ENCODE measurements at regions of chr11 and their contacts with region 1.

Region 1: GRCh38 chr11:124758317-124759203 is 3.5 kb downstream of the ESAM start:
- DNase-seq: peak; percentile 77 to 81
- ATAC-seq: peak; percentile 83 to 90
- H3K4me3 ChIP-seq: peak overlapping the region; percentile 52
- H3K27ac ChIP-seq: peak overlapping the region; percentile 72 to 85
- H3K4me1 ChIP-seq: peaks cover 19% of the 10 kb centered on the region
- CTCF ChIP-seq: peak; percentile 58
- EP300 ChIP-seq: no peak
- POLR2A ChIP-seq: no peak
- RAD21 ChIP-seq: peak; percentile 50 to 53; a peak in 4 of 5 replicates

Region 2: DNA sequence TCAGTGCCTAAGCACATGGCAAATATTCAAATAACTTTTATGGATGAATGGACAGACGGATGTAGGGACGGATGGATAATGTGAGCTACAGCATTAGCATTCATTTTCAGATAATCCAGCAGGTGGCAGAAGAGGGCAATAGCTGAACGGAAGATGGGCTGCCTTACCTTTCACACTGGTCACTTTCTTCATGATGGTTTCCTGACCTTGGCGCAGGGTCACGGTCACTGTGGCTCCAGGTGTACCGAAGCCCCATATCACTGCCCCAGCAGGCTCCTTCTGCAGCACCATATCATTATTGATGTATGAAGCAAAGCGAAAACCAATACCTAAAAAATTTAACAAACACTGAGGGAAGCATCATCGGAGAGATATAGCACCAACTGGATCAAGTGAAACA is 89.4 kb before region 1 on chr11:
- CTCF ChIA-PET with region 1: interaction called, 42 read pairs
- POLR2A ChIA-PET with region 1: interaction called, 4 read pairs
- DNase-seq: peak; percentile 48 to 49
- ATAC-seq: peak; percentile 57 to 65; a peak in 4 of 6 replicates
- H3K4me3 ChIP-seq: no peak overlapping the region
- H3K27ac ChIP-seq: no peak overlapping the region
- H3K4me1 ChIP-seq: no peaks in the 10 kb centered on the region
- CTCF ChIP-seq: peak; percentile 67
- EP300 ChIP-seq: no peak
- POLR2A ChIP-seq: no peak
- RAD21 ChIP-seq: peak; percentile 76 to 81

Region 3: DNA sequence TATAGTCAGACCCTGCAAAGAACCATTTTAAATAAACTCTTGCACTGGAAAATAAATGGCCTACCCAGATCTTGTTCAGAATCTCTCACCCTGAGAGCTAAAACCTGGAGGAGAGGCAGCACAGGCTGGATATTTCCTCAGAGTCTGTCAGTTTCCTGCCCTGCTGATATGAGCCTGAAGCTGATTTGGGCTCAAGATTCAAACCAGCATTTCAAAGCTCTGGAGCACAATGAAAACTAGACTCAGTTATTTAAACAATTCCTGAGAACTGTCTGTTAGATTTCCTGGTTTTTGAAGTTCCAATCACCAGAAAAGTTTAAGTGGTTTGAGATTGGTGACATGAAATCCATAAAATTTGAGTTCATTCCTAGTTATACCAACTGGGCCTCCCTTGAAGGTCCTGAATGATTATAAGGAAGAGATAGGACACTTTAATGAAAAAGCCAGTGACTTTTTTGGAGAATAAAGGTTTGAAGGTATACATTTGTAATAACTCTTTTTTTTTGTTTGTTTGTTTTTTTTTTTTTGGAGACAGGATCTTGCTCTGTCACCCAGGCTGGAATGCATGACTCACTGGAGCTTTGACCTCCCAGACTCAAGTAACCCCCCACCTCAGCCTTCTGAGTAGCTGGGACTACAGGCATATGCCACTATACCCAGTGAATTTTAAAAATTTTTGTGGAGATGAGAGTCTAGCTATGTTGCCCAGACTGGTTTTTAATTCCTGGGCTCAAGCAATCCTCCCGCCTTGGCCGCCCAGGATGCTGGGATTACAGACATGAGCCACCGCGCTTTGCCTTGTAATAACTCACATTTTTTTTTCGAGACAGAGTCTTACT is 11.5 kb after region 1 on chr11:
- CTCF ChIA-PET with region 1: interaction called, 22 read pairs
- POLR2A ChIA-PET with region 1: no interaction called
- DNase-seq: peak in 1 of 2 experiments; percentile 62
- ATAC-seq: peak; percentile 50 to 85; a peak in 4 of 6 replicates
- H3K4me3 ChIP-seq: no peak overlapping the region
- H3K27ac ChIP-seq: peak overlapping the region; percentile 75 to 85
- H3K4me1 ChIP-seq: peaks cover 68% of the 10 kb centered on the region
- CTCF ChIP-seq: no peak
- EP300 ChIP-seq: no peak; a peak in 1 of 5 replicates
- POLR2A ChIP-seq: no peak
- RAD21 ChIP-seq: no peak

Region 4: GRCh38 chr11:124784051-124784450 is 25.5 kb after region 1 on chr11:
- CTCF ChIA-PET with region 1: interaction called, 13 read pairs
- POLR2A ChIA-PET with region 1: no interaction called
- DNase-seq: no peak
- ATAC-seq: no peak
- H3K4me3 ChIP-seq: no peak overlapping the region
- H3K27ac ChIP-seq: no peak overlapping the region
- H3K4me1 ChIP-seq: no peaks in the 10 kb centered on the region
- CTCF ChIP-seq: no peak
- EP300 ChIP-seq: no peak
- POLR2A ChIP-seq: no peak
- RAD21 ChIP-seq: no peak

Region 5: DNA sequence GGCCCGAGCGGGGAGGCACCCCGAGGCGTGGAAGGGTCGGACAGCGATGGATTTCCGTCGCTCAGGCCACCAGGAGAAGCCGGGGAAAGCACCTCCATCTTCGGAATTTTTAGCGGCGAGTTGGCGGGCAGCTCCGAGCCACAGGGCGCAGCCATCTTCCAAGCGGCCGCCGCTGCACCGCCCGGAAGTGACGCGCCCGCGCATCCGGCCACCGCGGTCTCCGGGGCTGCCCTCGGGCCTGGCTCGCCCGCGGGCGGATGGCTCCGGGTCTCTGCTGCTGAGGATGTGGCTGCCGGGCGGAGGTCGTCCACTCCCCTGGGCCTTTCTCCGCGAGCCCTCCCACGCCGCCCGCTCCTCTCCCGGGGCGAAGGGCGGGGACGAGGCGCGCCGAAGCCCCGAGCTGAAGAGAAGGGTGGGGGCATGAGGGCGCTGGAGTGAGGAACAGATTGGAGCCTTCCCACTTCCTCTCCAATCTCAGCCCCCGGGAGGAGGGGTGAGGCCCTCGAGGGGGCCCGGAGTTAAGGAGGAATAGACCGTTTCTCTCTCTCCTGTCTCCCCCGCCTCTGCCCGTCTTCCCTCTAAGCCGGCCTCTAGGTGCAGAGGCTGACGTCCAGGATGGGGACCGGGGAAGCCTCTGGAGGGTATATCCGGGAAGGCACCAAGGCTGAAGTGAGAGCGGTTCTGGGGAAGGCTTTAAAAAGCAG is 41.8 kb after region 1 on chr11 and contains the start of gene MSANTD2:
- CTCF ChIA-PET with region 1: interaction called, 45 read pairs
- POLR2A ChIA-PET with region 1: interaction called, 3 read pairs
- DNase-seq: peak; percentile 68
- ATAC-seq: peak; percentile 96 to 97
- H3K4me3 ChIP-seq: peak within 1 kb of the TSS; percentile 100
- H3K27ac ChIP-seq: peak within 1 kb of the TSS; percentile 99 to 100
- H3K4me1 ChIP-seq: peaks cover 15% of the 10 kb centered on the region; the same call in 2 of the 3 replicates
- CTCF ChIP-seq: no peak
- EP300 ChIP-seq: no peak
- POLR2A ChIP-seq: peak; percentile 78
- RAD21 ChIP-seq: no peak
- polyA plus RNA-seq, gene MSANTD2: 6.4 TPM in 2 replicates

Region 6: GRCh38 chr11:125224391-125225010 is 465.9 kb after region 1 on chr11:
- CTCF ChIA-PET with region 1: no interaction called
- POLR2A ChIA-PET with region 1: no interaction called
- DNase-seq: no peak
- ATAC-seq: peak in 1 of 2 experiments; percentile 23; a peak in 1 of 6 replicates
- H3K4me3 ChIP-seq: no peak overlapping the region
- H3K27ac ChIP-seq: no peak overlapping the region
- H3K4me1 ChIP-seq: no peaks in the 10 kb centered on the region
- CTCF ChIP-seq: no peak
- EP300 ChIP-seq: no peak
- POLR2A ChIP-seq: no peak
- RAD21 ChIP-seq: no peak

Measured in A549 (cell line).